HAP-1 (cell line): ENCODE measurements at regions of chr17 and their contacts with region 1.

Region 1: DNA sequence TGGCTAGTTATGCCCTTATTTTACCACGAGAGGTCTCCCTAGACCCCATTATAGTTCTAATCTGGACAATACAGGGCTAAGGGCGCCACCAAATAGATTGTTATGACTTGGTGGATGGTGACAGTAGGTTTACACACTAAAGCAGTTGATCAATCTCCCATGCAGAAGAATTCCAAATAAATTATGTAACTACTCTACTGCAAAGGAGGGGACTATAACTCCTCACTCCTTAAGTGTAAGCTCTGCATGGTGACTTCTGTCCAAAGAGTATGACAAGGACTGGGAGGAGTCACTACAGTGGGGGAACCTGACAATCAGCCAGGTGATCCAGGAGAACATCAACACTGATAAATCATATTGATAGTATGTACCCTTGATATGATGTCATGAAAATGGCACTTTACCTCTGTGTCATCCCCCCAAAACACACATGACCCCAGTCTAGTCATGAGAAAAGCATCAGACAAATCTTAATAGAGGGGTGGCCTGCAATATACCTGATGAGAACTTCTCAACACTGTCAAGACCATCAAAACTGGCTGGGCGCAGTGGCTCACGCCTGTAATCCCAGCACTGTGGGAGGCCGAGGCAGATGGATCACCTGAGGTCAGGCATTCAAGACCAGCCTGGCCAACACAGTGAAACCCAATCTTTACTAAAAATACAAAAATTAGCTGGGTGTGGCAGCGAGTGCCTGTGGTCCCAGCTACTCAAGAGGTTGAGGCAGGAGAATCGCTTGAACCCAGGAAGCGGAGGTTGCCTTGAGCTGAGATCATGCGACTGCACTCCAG is 20.1 kb upstream of the YPEL2 start:
- DNase-seq: peak; percentile 62 to 86
- H3K4me3 ChIP-seq: no peak overlapping the region
- H3K4me1 ChIP-seq: no peaks in the 10 kb centered on the region
- H3K27me3 ChIP-seq: no peaks in the 10 kb centered on the region

Region 2: GRCh38 chr17:59167571-59168001 is 143.7 kb before region 1 on chr17:
- in situ Hi-C with region 1: no loop called
- DNase-seq: no peak
- H3K4me3 ChIP-seq: no peak overlapping the region
- H3K4me1 ChIP-seq: peaks cover 24% of the 10 kb centered on the region
- H3K27me3 ChIP-seq: no peaks in the 10 kb centered on the region

Region 3: GRCh38 chr17:59440784-59441441 is 129.6 kb after region 1 on chr17:
- in situ Hi-C with region 1: loop called (anchors 5 kb)
- DNase-seq: peak; percentile 76 to 94
- H3K4me3 ChIP-seq: no peak overlapping the region
- H3K4me1 ChIP-seq: peaks cover 9% of the 10 kb centered on the region
- H3K27me3 ChIP-seq: no peaks in the 10 kb centered on the region

Region 4: DNA sequence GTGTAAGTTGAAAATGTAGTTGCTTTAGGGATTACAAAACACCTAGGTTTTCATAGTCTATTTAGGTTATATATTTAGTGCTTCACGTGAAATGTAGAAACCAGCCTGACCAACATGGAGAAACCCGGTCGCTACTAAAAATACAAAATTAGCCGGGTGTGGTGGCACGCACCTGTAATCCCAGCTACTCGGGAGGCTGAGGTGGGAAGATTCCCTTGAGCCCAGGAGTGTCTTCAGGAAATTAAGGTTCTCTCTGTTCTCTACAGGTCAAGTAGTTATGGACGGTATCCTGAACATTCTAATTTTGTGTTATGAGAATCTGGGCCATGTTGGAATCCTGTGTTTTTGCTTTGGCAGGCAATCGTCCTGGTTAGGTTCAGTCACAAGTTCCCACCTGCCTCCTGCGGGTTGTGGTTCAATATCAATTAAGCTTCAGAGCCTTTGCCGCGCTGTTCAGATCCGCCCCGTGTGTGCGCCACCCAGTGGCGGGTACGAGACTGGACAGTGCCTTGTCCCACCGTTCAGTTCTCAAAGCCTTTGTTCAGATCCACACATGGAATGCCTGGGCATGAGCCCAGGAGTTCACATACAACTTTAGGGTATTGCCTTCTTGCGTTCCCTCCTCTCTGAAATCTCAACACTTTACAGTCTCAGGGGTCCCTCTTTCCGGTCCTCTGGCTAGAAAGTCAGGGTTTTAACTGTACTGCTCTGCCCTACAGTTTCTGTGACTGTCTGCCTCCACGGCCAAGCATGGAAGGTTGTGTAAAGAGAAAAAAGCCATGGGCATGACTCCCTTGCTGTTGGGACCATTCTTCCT is 725.7 kb after region 1 on chr17:
- in situ Hi-C with region 1: loop called (anchors 25 kb)
- DNase-seq: peak; percentile 85
- H3K4me3 ChIP-seq: no peak overlapping the region
- H3K4me1 ChIP-seq: no peaks in the 10 kb centered on the region
- H3K27me3 ChIP-seq: peaks cover 3% of the 10 kb centered on the region; the same call in 1 of the 2 replicates